ENCODE measurements at regions of chr9 and their contacts with region 1.

Region 1: DNA sequence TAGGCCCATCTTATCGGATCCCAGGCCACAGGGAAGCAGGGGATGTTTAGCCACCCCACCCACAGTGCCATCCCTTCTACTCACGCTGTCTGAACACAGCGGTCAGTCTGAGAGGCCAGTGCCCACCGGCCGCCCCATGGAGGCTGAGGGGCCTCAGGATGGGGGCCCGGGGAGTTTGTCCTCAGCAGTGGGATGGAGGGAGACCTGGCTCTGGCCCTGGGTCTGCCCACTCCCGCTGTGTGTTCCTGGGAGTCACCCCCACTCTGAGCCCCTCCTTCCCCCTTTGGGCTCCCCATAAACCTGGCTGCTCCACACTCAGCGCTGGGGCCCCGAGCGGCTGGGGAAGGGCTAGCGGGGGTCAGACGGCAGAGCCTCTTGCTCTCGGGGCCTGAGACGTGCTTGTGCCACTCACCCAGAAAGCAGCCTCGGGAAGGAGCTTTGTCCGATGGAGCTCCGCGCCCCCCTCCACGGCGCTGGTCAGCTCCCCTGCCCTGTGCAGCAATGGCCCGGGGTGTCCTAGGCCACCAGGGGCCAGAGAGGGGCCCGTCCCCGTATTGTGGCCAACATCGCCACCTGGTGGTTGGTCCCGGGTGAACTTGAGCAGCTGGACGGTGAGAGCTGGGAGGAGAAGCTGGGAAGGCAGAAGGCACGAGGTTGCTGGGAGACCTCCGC is 10.9 kb upstream of the LAMC3 start:
- DNase-seq: peak; percentile 96
- ATAC-seq: peak; percentile 90
- H3K4me3 Mint-ChIP-seq: no peak overlapping the region
- H3K27ac Mint-ChIP-seq: no peak overlapping the region
- H3K4me1 Mint-ChIP-seq: peaks cover 3% of the 10 kb centered on the region; the same call in 1 of the 2 replicates
- H3K27me3 Mint-ChIP-seq: peaks cover 14% of the 10 kb centered on the region
- CTCF ChIP-seq: peak; percentile 83

Region 2: DNA sequence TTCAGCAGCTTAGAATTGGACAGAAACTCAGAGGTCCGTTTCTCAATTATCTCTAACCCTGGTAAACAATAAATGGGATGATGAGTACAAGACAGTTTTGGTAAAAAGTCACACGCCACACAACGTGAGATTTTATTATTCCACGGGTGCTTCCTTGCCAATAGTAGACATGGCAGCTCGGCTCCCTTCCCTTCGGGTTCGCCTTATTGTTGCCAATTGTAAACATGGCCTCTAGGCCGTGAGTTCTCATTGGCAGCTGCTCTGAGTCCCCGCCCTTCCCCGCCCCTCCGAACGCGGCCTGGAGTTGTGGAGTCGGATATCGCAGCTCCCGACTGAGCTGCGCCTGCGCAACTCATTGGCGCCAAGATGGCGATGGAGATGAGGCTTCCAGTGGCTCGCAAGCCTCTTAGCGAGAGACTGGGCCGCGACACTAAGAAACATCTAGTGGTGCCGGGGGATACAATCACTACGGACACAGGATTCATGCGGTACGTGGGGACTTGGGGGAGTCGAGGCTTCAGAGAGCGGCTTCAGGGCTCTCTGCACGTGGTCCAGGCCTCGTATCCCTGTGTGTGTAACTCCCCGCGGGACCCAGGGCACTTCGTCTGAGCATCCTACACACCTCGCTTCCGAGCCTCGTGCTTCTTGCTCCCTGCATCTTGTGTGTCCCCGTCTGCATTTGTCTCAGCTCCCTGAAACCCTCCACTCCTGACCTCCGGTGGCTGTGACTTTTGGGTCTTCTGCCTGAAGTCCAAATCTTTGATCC is 304.5 kb before region 1 on chr9 and contains the start of gene EXOSC2:
- CTCF ChIA-PET with region 1: interaction called, 15 read pairs
- POLR2A ChIA-PET with region 1: interaction called, 3 read pairs
- DNase-seq: peak; percentile 98
- ATAC-seq: peak; percentile 73
- H3K4me3 Mint-ChIP-seq: peak within 1 kb of the TSS; percentile 98
- H3K27ac Mint-ChIP-seq: peak within 1 kb of the TSS; percentile 94
- H3K4me1 Mint-ChIP-seq: peaks cover 58% of the 10 kb centered on the region
- H3K27me3 Mint-ChIP-seq: no peaks in the 10 kb centered on the region
- CTCF ChIP-seq: no peak
- total RNA-seq, gene EXOSC2: 76.1 to 80.3 TPM (median 79.2 TPM) in 3 replicates

Region 3: DNA sequence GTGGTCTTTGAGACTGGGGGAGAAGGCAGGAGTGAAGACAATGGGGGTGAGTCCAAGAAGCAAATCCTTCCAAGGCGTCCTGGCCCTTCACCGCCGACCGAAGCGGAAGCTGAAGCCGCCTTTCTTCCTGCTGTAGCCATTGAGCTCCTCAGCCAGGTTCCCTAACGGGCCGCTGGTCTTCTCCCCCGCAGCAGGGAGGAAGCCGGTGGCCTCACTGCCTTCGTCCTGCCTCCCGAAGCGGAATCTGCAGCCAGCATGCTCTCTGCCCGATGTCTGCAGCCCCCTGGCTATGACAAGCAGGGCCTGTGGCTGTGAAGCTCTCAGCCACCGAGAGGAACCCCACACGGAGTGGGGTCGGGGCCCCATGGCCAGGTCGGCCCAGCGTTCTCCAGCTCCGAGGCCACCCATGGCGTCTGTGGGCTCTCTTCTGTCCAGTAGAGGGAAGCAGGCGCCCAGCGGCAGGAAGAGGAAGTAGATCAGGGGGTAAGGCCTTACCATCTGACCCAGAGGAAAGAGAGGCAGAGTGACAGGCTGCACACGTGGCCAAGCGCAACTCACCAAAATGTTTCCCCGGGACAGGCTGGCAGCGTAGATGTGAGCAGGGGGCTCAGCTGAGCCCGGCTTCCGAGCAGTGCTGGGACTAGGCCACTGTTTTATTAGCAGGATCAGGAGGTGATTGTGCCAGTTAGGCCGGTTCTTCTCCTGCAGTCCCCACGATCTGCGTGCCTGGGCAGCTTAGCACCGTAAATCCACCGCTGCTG is 104.5 kb before region 1 on chr9:
- CTCF ChIA-PET with region 1: interaction called, 69 read pairs
- POLR2A ChIA-PET with region 1: no interaction called
- DNase-seq: peak; percentile 51
- ATAC-seq: peak; percentile 63
- H3K4me3 Mint-ChIP-seq: no peak overlapping the region
- H3K27ac Mint-ChIP-seq: peak overlapping the region; percentile 60; the same call in 1 of the 2 replicates
- H3K4me1 Mint-ChIP-seq: no peaks in the 10 kb centered on the region
- H3K27me3 Mint-ChIP-seq: no peaks in the 10 kb centered on the region
- CTCF ChIP-seq: no peak

Region 4: GRCh38 chr9:130932255-130933079 is 65.6 kb before region 1 on chr9:
- CTCF ChIA-PET with region 1: interaction called, 24 read pairs
- POLR2A ChIA-PET with region 1: no interaction called
- DNase-seq: peak; percentile 35
- ATAC-seq: peak; percentile 29
- H3K4me3 Mint-ChIP-seq: 0 out of 2 replicates have a peak overlapping the region, but pooled peaks have one; percentile 0
- H3K27ac Mint-ChIP-seq: peak overlapping the region; percentile 80
- H3K4me1 Mint-ChIP-seq: peaks cover 47% of the 10 kb centered on the region
- H3K27me3 Mint-ChIP-seq: peaks cover 11% of the 10 kb centered on the region
- CTCF ChIP-seq: no peak

Region 5: DNA sequence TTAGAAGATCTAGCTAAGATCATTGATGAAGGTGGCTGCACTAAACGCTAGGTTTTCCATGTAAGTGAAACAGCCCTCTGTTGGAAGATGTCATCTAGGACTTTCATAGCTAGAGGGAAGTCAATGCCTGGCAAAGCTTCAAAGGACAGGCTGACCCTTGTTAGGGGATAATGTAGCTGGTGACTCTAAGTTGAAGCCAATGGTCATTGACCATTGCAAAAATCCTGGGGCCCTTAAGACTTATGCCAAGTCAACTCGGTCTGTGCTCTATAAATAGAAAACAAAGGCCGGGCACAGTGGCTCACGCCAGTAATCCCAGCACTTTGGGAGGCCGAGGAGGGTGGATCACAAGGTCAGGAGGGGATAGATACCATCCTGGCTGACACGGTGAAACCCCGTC is 32.4 kb before region 1 on chr9:
- CTCF ChIA-PET with region 1: interaction called, 31 read pairs
- POLR2A ChIA-PET with region 1: no interaction called
- DNase-seq: no peak
- ATAC-seq: no peak
- H3K4me3 Mint-ChIP-seq: no peak overlapping the region
- H3K27ac Mint-ChIP-seq: no peak overlapping the region
- H3K4me1 Mint-ChIP-seq: no peaks in the 10 kb centered on the region
- H3K27me3 Mint-ChIP-seq: no peaks in the 10 kb centered on the region
- CTCF ChIP-seq: no peak

Region 6: DNA sequence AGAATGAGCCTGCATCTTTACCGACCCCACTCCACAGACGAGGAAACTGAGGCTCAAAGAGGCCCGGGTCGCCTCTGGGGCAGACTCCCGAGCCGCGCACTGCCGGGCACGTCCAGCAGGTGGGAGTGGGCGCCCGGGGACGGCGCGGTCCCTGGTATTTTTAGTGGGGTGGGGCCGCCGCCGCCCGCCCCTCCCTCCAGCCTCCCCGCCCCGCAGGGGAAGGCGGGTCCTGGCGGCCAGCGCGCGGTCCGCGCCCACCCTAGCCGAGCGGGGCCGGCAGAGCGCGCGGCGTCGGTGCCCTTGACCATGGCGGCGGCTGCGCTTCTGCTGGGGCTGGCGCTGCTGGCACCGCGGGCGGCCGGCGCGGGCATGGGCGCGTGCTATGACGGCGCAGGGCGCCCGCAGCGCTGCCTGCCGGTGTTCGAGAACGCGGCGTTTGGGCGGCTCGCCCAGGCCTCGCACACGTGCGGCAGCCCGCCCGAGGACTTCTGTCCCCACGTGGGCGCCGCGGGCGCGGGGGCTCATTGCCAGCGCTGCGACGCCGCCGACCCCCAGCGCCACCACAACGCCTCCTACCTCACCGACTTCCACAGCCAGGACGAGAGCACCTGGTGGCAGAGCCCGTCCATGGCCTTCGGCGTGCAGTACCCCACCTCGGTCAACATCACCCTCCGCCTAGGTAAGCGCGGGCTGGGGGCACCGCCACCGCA is 11.0 kb after region 1 on chr9 and contains the start of gene LAMC3:
- CTCF ChIA-PET with region 1: interaction called, 30 read pairs
- POLR2A ChIA-PET with region 1: no interaction called
- DNase-seq: peak; percentile 58
- ATAC-seq: peak; percentile 66
- H3K4me3 Mint-ChIP-seq: peak within 1 kb of the TSS; percentile 64
- H3K27ac Mint-ChIP-seq: no peak within 1 kb of the TSS
- H3K4me1 Mint-ChIP-seq: peaks cover 30% of the 10 kb centered on the region
- H3K27me3 Mint-ChIP-seq: peaks cover 16% of the 10 kb centered on the region
- CTCF ChIP-seq: no peak
- total RNA-seq, gene LAMC3: 35.9 to 50.9 TPM (median 36.0 TPM) in 3 replicates

Region 7: GRCh38 chr9:131149688-131150053 is 151.6 kb after region 1 on chr9:
- CTCF ChIA-PET with region 1: no interaction called
- POLR2A ChIA-PET with region 1: no interaction called
- DNase-seq: no peak
- ATAC-seq: no peak
- H3K4me3 Mint-ChIP-seq: no peak overlapping the region
- H3K27ac Mint-ChIP-seq: no peak overlapping the region
- H3K4me1 Mint-ChIP-seq: no peaks in the 10 kb centered on the region
- H3K27me3 Mint-ChIP-seq: no peaks in the 10 kb centered on the region
- CTCF ChIP-seq: no peak

Measured in WTC11 (cell line).